Left cardiac atrium (tissue), 4 donors: ENCODE measurements at regions of chr3 and their contacts with region 1.

Region 1: DNA sequence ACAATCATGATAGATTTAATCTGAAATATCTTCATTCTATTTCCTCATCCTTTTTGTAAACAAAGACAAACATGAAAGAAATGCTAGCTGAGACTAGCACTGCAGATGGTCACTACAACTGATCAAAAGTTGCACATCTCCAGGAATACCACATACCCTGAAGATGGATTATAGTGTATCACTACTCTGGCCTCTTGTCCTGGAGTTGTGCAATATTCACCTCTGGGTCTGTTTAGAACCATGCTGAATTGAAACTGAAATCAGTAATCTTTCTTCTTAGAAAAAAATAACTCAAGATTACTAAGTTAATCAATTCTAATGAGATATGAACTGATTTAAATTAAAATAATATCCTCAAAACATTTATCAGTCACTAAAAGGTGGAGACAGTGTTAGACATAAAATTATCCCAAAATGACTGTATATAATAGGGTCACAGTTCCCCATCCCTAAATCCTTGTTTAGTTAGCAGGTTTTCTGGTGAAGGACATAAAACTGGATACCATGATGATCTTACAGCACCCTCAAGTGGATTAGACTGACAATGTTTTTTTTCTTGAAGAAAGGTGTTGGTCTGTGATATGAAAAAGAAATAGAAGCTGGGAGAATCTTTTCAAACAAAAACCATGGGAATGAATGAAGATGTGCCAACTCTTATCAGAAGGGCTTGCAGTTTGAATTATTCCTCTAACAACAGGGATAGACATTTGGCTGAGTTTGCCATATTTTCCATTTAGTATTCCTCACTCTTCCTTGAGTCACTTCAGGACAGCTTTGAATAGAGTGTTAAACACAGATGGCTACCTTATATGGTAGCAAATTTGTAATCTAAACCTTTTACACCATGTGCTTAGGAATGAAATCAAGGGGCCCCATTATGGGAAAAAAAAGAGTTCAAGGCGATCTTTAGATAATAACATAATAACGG is 7.1 kb upstream of the TTC14 start:
- DNase-seq: no peak
- ATAC-seq: no peak

Region 2: DNA sequence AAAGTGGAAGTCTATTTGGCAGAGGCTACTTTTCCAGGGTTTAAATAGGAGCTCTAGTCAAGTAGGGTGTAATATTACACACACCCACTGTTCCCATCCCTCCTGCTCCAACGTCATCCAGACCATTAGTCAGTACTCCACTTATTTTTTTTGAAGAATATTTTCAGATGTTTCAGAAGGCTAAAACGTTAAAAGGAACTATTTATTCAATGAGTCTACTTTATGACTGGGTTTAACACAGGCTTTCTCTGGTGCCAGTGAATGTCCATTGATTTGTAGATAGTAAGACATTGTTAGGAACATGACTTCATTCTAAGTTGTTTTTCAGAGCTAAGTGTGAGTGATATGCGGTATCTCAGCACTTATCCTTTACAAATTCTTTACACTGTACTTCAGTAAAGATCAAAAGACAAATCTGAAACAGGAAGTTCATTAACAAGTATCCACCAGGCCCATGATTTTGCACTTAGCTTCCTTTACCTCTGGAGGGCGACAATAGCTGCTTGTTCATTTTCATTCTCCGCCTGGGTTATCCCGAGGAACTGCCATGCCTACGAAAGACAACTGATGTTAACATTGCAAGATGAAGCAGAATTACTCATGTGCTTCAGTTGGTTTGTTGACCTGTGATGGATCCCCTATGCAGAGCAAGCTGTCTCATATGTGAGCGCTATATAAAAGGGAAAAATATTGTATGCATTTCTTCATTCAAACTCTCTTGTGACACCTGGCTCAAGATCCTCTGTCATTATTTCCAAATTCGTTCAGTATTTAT is 783.4 kb before region 1 on chr3:
- intact Hi-C with region 1: loop called in 1 of 2 experiments (anchors 5 kb)
- DNase-seq: no peak
- ATAC-seq: peak; percentile 76 to 86

Region 3: GRCh38 chr3:179929091-179929529 is 665.8 kb before region 1 on chr3:
- intact Hi-C with region 1: loop called in 1 of 2 experiments (anchors 5 kb)
- DNase-seq: no peak
- ATAC-seq: no peak